T-cell (primary cell): ENCODE measurements at regions of chr2 and their contacts with region 1.

Region 1: DNA sequence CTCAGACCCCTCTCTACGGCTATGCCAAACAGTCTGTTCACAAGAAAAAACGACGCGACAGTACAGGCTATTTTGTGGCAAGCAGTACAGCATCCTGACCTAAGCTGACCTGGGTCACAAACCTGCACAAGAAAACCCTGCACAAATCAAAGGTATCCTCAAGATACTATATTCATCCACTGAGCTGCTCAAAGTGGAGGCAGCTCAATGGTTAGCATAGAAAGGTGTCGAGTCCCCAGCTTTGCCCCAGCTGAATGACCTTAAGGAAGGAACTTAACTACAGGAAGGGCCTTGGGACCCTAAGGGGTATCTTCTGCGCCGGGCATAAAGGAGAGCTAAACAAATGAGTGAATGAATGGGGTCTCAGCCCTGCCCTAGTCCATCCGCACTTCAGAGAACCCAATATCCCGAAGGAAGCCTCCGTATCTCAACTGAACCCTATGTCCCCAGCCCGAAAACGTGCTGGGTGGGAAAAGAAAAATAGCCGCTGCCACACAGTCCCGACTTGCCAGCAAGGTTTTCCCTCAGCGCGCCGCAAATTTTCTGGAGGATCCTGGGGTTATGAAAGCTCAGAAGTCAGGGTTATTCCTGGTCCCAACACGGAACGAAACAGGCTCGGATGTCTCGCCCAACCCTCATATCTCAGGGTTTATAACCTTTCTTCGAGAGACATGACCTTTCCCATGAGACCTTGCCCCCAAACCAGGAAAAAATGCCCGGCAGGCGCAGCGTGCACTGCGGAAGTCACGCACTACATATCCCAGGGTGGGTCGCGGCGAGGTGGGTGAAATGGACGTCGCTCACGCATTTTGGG is at the start of gene FASTKD1:
- DNase-seq: peak; percentile 58 to 93 (median 80)
- ATAC-seq: peak; percentile 100
- H3K4me3 ChIP-seq: peak within 1 kb of the TSS; percentile 97 to 99
- H3K4me3 Mint-ChIP-seq: peak within 1 kb of the TSS; percentile 95 to 99 (median 98)
- H3K27ac ChIP-seq: peak within 1 kb of the TSS; percentile 81
- H3K27ac Mint-ChIP-seq: peak within 1 kb of the TSS; percentile 68 to 89
- H3K4me1 ChIP-seq: peaks cover 5 to 8% of the 10 kb centered on the region in 2 experiments
- H3K4me1 Mint-ChIP-seq: peaks cover 20 to 27% (median 23%) of the 10 kb centered on the region in 3 donors
- H3K27me3 ChIP-seq: no peaks in the 10 kb centered on the region
- H3K27me3 Mint-ChIP-seq: no peaks in the 10 kb centered on the region
- total RNA-seq, gene FASTKD1: 17.6 to 26.8 (median 25.2) TPM

Region 2: GRCh38 chr2:169275696-169276444 is 297.5 kb before region 1 on chr2:
- CTCF ChIA-PET with region 1: no interaction called
- POLR2A ChIA-PET with region 1: no interaction called
- DNase-seq: no peak
- ATAC-seq: no peak
- H3K4me3 ChIP-seq: no peak overlapping the region
- H3K4me3 Mint-ChIP-seq: no peak overlapping the region
- H3K27ac ChIP-seq: no peak overlapping the region
- H3K27ac Mint-ChIP-seq: no peak overlapping the region
- H3K4me1 ChIP-seq: no peaks in the 10 kb centered on the region
- H3K4me1 Mint-ChIP-seq: no peaks in the 10 kb centered on the region
- H3K27me3 ChIP-seq: no peaks in the 10 kb centered on the region
- H3K27me3 Mint-ChIP-seq: peaks cover 0 to 3% of the 10 kb centered on the region in 2 donors

Region 3: DNA sequence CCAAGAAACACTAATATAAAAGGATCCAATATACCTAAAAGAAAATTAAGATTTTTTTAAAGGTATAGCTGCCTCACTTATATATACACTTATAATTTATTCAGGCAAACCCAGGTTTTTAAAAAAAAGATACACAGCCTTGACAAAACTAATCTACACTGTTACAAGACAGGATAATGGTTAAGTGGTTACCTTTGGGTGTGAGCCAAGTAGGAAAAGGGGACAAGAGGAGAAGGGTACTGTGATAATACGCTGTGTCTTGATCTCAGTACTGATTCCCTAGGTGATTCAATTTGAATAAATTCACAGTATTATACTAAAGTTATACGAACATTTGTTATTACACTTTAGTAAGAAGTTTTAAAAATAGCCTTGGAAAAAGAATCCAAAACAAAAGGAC is 33.2 kb before region 1 on chr2:
- CTCF ChIA-PET with region 1: no interaction called
- POLR2A ChIA-PET with region 1: no interaction called
- DNase-seq: no peak
- ATAC-seq: no peak
- H3K4me3 ChIP-seq: no peak overlapping the region
- H3K4me3 Mint-ChIP-seq: no peak overlapping the region
- H3K27ac ChIP-seq: no peak overlapping the region
- H3K27ac Mint-ChIP-seq: no peak overlapping the region
- H3K4me1 ChIP-seq: no peaks in the 10 kb centered on the region
- H3K4me1 Mint-ChIP-seq: no peaks in the 10 kb centered on the region
- H3K27me3 ChIP-seq: no peaks in the 10 kb centered on the region
- H3K27me3 Mint-ChIP-seq: no peaks in the 10 kb centered on the region

Region 4: GRCh38 chr2:169584005-169584877 is 10.9 kb after region 1 on chr2 and contains the start of gene PPIG:
- CTCF ChIA-PET with region 1: interaction called, 3 to 10 read pairs
- POLR2A ChIA-PET with region 1: interaction called, 16 to 34 read pairs
- DNase-seq: peak; percentile 69 to 96 (median 87)
- ATAC-seq: peak; percentile 88 to 97 (median 94)
- H3K4me3 ChIP-seq: peak within 1 kb of the TSS; percentile 92 to 98
- H3K4me3 Mint-ChIP-seq: peak within 1 kb of the TSS; percentile 99
- H3K27ac ChIP-seq: peak within 1 kb of the TSS; percentile 99
- H3K27ac Mint-ChIP-seq: peak within 1 kb of the TSS; percentile 98 to 99
- H3K4me1 ChIP-seq: peaks cover 16 to 29% of the 10 kb centered on the region in 2 experiments
- H3K4me1 Mint-ChIP-seq: peaks cover 36 to 47% (median 39%) of the 10 kb centered on the region in 3 donors
- H3K27me3 ChIP-seq: no peaks in the 10 kb centered on the region
- H3K27me3 Mint-ChIP-seq: no peaks in the 10 kb centered on the region
- total RNA-seq, gene PPIG: 63.6 to 78.2 (median 71.3) TPM

Region 5: DNA sequence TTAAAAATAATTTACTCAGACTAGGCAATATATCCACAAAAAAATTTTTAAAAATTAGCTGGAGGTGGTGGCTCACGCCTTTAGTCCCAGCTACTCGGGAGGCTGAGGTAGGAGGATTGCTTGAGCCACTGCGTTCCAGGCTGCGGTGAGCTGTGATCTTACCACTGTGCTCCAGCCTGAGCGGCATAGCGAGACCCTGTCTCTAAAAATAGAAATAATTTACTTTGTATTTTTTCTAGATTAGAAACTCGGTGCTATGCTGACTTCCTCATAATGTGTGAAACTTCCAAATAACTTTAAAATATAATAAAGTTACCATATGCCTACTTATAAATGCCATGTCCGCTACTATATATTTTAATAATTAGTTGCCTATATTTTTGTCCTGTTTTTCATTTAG is 17.4 kb after region 1 on chr2:
- CTCF ChIA-PET with region 1: interaction called, 3 to 4 read pairs
- POLR2A ChIA-PET with region 1: interaction called, 5 to 13 read pairs
- DNase-seq: no peak
- ATAC-seq: no peak
- H3K4me3 ChIP-seq: no peak overlapping the region
- H3K4me3 Mint-ChIP-seq: no peak overlapping the region
- H3K27ac ChIP-seq: no peak overlapping the region
- H3K27ac Mint-ChIP-seq: no peak overlapping the region
- H3K4me1 ChIP-seq: peaks cover 11 to 25% of the 10 kb centered on the region in 2 experiments
- H3K4me1 Mint-ChIP-seq: peaks cover 50 to 52% (median 51%) of the 10 kb centered on the region in 3 donors
- H3K27me3 ChIP-seq: no peaks in the 10 kb centered on the region
- H3K27me3 Mint-ChIP-seq: no peaks in the 10 kb centered on the region